OCI-LY7 (cell line): ENCODE measurements at regions of chr18 and their contacts with region 1.

Region 1: DNA sequence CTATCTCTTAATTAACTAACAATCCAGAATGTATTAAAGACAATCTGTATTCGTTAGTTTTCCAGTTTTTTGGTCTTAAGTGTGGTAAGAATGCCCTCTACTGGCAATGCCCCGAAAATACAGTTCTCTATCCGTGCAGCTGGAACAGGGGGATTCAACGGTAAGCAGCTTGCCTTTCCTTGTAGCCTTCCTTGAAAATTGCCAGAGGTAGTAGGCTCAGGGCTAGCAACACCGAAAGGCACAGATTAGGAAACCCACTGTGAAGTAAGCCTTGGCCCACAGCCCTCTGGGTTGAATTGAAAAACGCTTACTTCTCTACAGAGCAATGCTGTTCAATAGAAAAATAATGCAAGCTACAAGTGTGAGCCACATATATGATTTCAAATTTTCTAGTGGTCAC is 17.1 kb upstream of the VPS4B start:
- DNase-seq: peak; percentile 45
- H3K4me3 ChIP-seq: no peak overlapping the region
- H3K27ac ChIP-seq: no peak overlapping the region
- H3K4me1 ChIP-seq: no peaks in the 10 kb centered on the region
- CTCF ChIP-seq: peak; percentile 81

Region 2: DNA sequence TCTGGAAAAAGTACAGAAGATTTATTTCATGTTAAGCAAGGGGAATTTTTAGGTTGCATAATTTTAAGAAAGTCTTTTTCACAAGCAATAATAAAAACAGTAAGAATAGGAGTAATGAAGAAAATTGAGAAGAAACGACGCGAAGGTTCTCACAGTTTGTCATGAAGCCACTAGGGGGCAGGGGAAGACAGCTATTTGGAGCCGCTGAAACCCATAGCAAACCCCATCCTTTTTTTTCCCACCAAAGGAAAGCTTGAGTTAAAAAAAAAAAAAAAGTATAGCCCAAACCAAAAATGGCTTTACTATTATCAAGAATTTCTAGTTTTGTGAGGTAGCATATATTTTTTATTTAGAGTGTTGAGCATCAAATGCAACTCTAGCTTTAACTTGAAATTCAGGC is 423.1 kb before region 1 on chr18:
- CTCF ChIA-PET with region 1: interaction called, 3 read pairs
- POLR2A ChIA-PET with region 1: no interaction called
- intact Hi-C with region 1: loop called (anchors 5 kb)
- DNase-seq: peak; percentile 39
- H3K4me3 ChIP-seq: no peak overlapping the region
- H3K27ac ChIP-seq: no peak overlapping the region
- H3K4me1 ChIP-seq: no peaks in the 10 kb centered on the region
- CTCF ChIP-seq: peak; percentile 76

Region 3: GRCh38 chr18:63267975-63268721 is 171.2 kb before region 1 on chr18:
- CTCF ChIA-PET with region 1: no interaction called
- POLR2A ChIA-PET with region 1: no interaction called
- intact Hi-C with region 1: no loop called
- DNase-seq: no peak
- H3K4me3 ChIP-seq: no peak overlapping the region
- H3K27ac ChIP-seq: no peak overlapping the region
- H3K4me1 ChIP-seq: no peaks in the 10 kb centered on the region
- CTCF ChIP-seq: no peak

Region 4: GRCh38 chr18:63307551-63308200 is 131.7 kb before region 1 on chr18:
- CTCF ChIA-PET with region 1: no interaction called
- POLR2A ChIA-PET with region 1: no interaction called
- intact Hi-C with region 1: no loop called
- DNase-seq: no peak
- H3K4me3 ChIP-seq: no peak overlapping the region
- H3K27ac ChIP-seq: no peak overlapping the region
- H3K4me1 ChIP-seq: no peaks in the 10 kb centered on the region
- CTCF ChIP-seq: no peak